ENCODE measurements at regions of chr7 and their contacts with region 1.

Region 1: DNA sequence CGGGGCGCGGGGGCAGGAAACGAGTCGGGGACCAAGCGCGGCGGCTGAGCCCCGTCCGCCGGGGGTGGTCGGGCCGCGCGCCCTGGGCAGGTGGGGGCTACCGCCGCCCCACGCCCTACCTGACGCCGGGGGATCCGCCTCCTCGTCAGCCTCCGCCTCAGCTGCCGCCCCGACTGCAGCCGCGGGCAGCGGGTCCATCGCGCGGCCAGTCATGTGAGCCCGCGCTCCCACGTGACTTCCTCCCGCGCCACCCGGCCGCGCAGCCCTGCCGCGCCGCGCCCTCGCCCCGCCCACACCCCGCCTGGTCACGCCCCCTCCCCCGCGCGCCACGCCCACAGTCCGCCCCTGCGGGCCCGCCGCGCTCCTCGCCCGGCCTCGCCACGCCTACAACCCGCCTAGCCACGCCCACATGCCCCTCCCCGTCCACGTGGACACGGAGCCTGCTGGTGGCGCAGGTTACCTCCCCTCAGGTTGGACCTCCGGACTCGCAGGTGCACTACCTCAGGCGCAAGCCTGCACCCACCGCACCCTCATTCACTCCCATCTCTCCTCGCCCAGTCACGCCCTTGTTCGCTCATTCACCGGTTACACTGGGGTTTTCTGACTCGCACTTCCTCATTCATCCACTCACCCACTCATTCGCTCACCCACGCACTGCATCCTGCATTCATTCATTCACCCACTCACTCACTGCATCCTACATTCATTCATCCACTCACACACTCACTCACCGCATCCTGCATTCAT is at the start of gene SNX8:
- DNase-seq: peak; percentile 93
- H3K4me3 Mint-ChIP-seq: peak within 1 kb of the TSS; percentile 91
- H3K27ac Mint-ChIP-seq: peak within 1 kb of the TSS; percentile 87
- H3K4me1 Mint-ChIP-seq: peaks cover 8% of the 10 kb centered on the region
- H3K27me3 Mint-ChIP-seq: no peaks in the 10 kb centered on the region
- total RNA-seq, gene SNX8: 40.8 and 41.8 TPM in 2 replicates

Region 2: DNA sequence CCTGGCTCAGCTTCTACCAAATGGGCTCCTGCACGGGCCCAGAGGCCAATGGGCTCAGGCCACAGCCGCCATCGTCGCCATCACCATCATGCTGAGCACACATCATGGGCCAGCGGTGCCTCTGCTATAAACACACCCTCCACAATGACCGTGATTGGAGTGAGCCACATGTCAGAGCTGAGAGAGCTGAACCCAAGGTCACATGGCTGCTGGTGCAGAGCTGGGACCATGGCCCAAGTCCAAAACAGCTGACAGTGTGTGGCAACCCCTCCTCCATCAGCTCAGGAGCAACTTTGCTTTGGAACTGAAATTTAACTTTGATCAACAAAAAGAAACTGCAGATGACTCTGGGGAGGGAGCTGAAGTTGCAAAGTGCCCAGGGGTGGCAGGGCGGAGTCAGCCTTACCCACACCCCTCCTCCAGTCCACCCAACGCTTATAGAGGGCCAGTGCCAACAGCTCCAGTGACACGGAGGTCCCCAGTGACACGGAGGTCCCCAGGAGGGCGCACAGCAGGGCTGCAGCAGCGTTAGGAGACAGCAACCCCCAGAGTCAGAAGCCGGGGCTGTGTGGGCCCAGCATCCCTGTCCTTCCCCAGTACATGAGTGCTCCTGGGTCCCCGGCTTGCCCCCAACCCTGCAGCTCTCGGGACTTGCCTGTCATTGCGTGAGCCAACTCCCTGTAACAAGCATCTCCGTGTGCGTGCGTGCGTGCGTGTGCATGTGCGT is 394.7 kb before region 1 on chr7:
- intact Hi-C with region 1: loop called (anchors 5 kb)
- DNase-seq: no peak
- H3K4me3 Mint-ChIP-seq: peak overlapping the region; percentile 72
- H3K27ac Mint-ChIP-seq: no peak overlapping the region
- H3K4me1 Mint-ChIP-seq: peaks cover 42% of the 10 kb centered on the region
- H3K27me3 Mint-ChIP-seq: peaks cover 27% of the 10 kb centered on the region

Region 3: GRCh38 chr7:2241580-2242540 is 72.5 kb before region 1 on chr7 and contains the starts of genes MRM2 and NUDT1:
- intact Hi-C with region 1: loop called (anchors 2 kb)
- DNase-seq: peak; percentile 79
- H3K4me3 Mint-ChIP-seq: peak within 1 kb of the TSS; percentile 96
- H3K27ac Mint-ChIP-seq: peak within 1 kb of the TSS; percentile 92
- H3K4me1 Mint-ChIP-seq: peaks cover 25% of the 10 kb centered on the region
- H3K27me3 Mint-ChIP-seq: no peaks in the 10 kb centered on the region
- total RNA-seq, gene MRM2: 47.8 and 48.6 TPM in 2 replicates
- total RNA-seq, gene NUDT1: 74.9 TPM in 2 replicates

Measured in activated T-helper 1 cell treated with anti-CD3 and anti-CD28 coated beads, Interleukin-12 subunit alpha, Interleukin-12 subunit beta, Interleukin-2, Interleukin-4 antibody, amounts not matched to agents 30 ng/mL and 10 ng/mL and 1 ng/mL, durations not matched to agents 14 hours and 24 hours and 36 hours (primary cell).